Activated CD8-positive, alpha-beta T cell treated with anti-CD3 and anti-CD28 coated beads, Interleukin-2, amount 10 ng/mL, durations not matched to agents 7 days and 5 days (primary cell): ENCODE measurements at regions of chr6 and their contacts with region 1.

Region 1: DNA sequence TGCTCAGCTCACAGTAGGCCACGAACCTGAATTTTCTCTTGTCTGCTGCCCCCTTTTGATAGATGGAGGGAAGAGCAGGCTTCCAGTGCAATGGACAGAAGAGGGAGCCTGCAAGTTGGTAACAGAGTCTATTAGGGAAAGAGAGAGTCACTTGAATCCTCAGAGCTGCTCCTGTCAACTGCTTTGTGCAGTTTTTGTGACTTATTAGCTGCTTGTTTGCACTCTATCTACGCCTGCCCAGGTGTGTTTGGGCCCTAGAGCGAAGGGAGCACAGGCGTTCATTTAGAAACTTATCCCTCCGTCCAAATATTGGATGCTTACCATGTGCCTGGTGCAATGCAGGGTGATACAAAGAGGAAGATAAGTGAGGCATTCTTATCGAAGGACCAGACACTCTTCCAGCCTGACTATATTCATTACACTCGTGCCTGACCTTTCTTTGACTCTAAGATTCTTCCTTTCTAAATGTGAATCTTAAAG is 11.6 kb upstream of the SLC2A12 start:
- DNase-seq: peak; percentile 72
- ATAC-seq: peak; percentile 90
- H3K4me3 Mint-ChIP-seq: no peak overlapping the region
- H3K27ac Mint-ChIP-seq: no peak overlapping the region
- H3K4me1 Mint-ChIP-seq: no peaks in the 10 kb centered on the region
- H3K27me3 Mint-ChIP-seq: peaks cover 9% of the 10 kb centered on the region

Region 2: DNA sequence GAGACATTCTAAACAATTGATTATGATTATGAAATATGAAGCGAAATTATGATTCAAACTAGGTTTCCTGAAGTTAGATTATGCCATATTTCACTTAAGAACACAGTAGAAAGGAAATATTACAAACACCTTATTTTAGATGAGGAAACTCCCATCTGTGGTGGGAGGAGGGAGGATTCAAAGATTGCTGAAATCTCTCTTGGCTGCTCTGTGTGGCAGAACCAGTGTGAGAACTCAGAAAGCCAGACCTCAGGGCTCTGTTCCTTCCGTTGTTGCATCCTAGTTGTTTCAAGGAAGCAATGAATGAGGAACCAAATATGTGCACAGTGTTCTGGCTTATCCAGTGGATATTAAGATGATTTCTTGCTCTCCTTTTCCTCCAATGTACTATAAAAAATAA is 1476.6 kb before region 1 on chr6:
- CTCF ChIA-PET with region 1: no interaction called
- POLR2A ChIA-PET with region 1: no interaction called
- DNase-seq: no peak
- ATAC-seq: no peak
- H3K4me3 Mint-ChIP-seq: no peak overlapping the region
- H3K27ac Mint-ChIP-seq: no peak overlapping the region
- H3K4me1 Mint-ChIP-seq: no peaks in the 10 kb centered on the region
- H3K27me3 Mint-ChIP-seq: peaks cover 10% of the 10 kb centered on the region

Region 3: GRCh38 chr6:133966654-133967329 is 97.2 kb before region 1 on chr6:
- CTCF ChIA-PET with region 1: interaction called, 28 read pairs
- POLR2A ChIA-PET with region 1: no interaction called
- DNase-seq: no peak
- ATAC-seq: no peak
- H3K4me3 Mint-ChIP-seq: no peak overlapping the region
- H3K27ac Mint-ChIP-seq: peak overlapping the region; percentile 16
- H3K4me1 Mint-ChIP-seq: peaks cover 20% of the 10 kb centered on the region
- H3K27me3 Mint-ChIP-seq: no peaks in the 10 kb centered on the region

Region 4: DNA sequence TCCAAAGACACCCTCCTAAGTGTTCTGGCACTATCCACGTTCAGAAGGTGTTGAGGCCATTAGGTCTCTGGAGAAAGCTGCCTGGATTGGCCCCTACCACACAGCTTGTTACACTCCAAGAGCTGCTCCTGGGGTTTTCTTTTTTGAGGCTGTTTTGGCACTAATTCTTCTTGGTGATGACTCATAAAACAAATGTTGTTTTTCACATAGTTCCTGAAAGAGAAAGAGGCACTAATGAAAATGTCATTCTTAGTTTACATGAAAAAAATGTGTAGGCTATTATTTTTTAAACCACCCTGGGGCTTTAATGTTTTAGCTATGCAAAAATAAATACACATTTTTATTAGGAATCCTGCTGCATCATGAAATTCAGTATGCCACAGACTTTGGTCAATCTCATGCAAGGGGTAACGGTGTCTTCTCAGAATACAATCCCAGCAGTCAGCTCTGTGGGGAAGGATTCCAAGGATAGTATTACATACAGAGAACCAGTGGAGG is 72.9 kb before region 1 on chr6:
- CTCF ChIA-PET with region 1: interaction called, 24 read pairs
- POLR2A ChIA-PET with region 1: no interaction called
- DNase-seq: no peak
- ATAC-seq: no peak
- H3K4me3 Mint-ChIP-seq: no peak overlapping the region
- H3K27ac Mint-ChIP-seq: no peak overlapping the region
- H3K4me1 Mint-ChIP-seq: peaks cover 4% of the 10 kb centered on the region
- H3K27me3 Mint-ChIP-seq: no peaks in the 10 kb centered on the region

Region 5: GRCh38 chr6:134047673-134048072 is 16.3 kb before region 1 on chr6:
- CTCF ChIA-PET with region 1: interaction called, 41 read pairs
- POLR2A ChIA-PET with region 1: no interaction called
- DNase-seq: no peak
- ATAC-seq: no peak
- H3K4me3 Mint-ChIP-seq: no peak overlapping the region
- H3K27ac Mint-ChIP-seq: no peak overlapping the region
- H3K4me1 Mint-ChIP-seq: peaks cover 11% of the 10 kb centered on the region
- H3K27me3 Mint-ChIP-seq: peaks cover 13% of the 10 kb centered on the region

Region 6: DNA sequence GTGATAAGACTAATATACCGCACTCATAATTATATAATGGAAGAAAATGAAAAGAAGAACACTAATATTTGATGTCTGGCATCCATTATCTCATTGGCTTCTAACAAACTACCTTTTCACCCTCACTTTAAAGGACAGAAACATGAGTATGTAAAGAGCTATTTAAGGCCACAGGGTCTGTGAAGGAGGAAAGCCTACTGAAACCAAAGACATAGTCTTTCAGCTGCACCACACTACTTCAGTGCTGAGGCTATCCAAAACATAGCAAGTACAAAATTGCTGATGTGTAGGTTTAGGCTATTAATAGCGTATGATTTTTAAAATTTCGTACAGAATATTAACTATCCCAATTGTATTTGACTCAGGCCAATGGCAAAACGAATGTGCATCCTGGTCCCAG is 26.6 kb after region 1 on chr6:
- CTCF ChIA-PET with region 1: interaction called, 60 read pairs
- POLR2A ChIA-PET with region 1: interaction called, 3 read pairs
- DNase-seq: no peak
- ATAC-seq: no peak
- H3K4me3 Mint-ChIP-seq: no peak overlapping the region
- H3K27ac Mint-ChIP-seq: no peak overlapping the region
- H3K4me1 Mint-ChIP-seq: peaks cover 6% of the 10 kb centered on the region
- H3K27me3 Mint-ChIP-seq: peaks cover 28% of the 10 kb centered on the region